ENCODE measurements at regions of chr12 and their contacts with region 1.

Region 1: GRCh38 chr12:114684098-114684869 is at the start of gene TBX3:
- H3K4me3 ChIP-seq: peak within 1 kb of the TSS; percentile 88
- H3K27ac ChIP-seq: peak within 1 kb of the TSS; percentile 91
- H3K4me1 ChIP-seq: peaks cover 4% of the 10 kb centered on the region
- CTCF ChIP-seq: peak; percentile 97

Region 2: GRCh38 chr12:114598111-114598510 is 86.2 kb before region 1 on chr12:
- CTCF ChIA-PET with region 1: no interaction called
- POLR2A ChIA-PET with region 1: no interaction called
- H3K4me3 ChIP-seq: no peak overlapping the region
- H3K27ac ChIP-seq: no peak overlapping the region
- H3K4me1 ChIP-seq: no peaks in the 10 kb centered on the region
- CTCF ChIP-seq: no peak

Region 3: DNA sequence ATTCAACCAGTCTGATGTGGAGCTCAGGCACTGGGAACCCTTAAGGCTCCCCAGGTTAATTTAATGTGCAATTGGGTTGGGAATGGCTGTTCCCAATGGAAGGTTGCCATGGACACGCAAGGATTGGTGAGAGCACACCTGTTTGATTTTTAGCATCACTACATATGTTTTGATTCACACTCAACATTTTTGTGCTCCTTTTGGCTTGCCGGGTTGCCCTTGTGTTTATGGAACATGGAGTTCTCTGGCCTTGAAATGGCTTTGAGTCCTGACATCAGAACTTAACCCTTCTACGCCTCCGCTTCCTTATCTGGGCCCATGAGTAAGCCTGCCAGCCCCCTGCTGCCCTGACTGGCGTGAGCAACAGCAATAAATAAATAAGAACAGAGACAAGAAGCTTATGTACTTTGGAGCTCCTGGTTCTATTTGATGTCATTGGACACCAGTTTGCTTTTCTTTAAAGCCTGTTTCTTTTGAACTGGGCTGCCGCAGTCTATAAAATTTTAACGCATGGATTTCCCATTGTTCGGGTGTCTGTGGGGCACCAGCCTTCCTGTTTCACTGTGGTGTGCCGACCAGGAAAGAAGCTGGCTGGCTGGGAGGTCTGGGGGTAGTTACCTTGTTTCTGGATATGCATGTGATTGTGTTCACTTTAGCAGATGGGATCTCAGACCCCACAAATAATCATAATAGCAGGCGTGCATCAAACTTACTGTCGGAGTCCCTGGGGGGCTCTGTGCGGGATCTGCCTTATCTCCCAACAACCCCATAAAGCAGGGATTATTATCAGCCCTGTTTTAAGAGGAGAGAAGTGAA is 28.1 kb before region 1 on chr12:
- CTCF ChIA-PET with region 1: no interaction called
- POLR2A ChIA-PET with region 1: interaction called, 10 read pairs
- H3K4me3 ChIP-seq: no peak overlapping the region
- H3K27ac ChIP-seq: peak overlapping the region; percentile 75
- H3K4me1 ChIP-seq: peaks cover 23% of the 10 kb centered on the region
- CTCF ChIP-seq: no peak

Region 4: GRCh38 chr12:114673169-114673833 is 11.0 kb before region 1 on chr12:
- CTCF ChIA-PET with region 1: no interaction called
- POLR2A ChIA-PET with region 1: interaction called, 17 read pairs
- H3K4me3 ChIP-seq: no peak overlapping the region
- H3K27ac ChIP-seq: no peak overlapping the region
- H3K4me1 ChIP-seq: no peaks in the 10 kb centered on the region
- CTCF ChIP-seq: no peak

Region 5: DNA sequence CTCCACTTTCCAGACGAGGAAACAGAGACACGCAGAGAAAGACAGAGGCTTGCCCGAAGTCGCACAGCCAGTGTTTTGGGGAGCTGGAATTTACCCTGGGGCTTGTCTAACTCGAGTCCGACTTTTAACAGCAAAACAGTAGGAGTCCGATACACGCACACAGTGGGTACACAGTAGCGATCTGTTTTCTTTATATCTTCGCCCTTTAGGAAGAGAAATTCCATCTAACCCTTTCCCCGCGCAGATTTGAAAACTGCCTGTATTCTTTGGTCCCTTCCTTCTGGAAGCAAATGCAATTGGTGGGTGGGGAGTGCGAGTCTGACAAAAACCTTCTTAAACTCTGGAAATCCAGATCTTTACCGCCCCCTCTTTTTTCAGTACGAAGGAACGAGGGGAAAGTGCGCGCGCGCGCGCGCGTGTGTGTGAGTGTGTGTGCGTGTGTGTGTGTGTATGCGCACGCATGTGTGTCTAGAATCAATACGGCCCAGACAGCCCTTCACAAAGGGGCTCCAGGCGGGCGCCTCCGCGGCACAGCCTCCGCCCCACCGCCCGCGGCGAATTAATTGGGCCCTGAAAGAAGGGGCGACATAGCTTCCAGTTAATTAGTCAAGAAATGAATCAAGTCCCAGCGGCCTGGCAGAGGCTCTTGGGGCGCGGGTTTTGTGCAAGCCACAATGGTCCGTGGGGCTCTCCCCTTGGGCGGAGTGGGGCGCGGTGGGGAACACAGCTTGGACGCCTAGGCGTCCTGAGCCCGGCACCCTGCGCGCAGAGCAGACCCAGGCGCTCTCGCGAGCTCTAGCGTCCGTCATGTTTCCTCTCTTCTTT is 13.7 kb after region 1 on chr12:
- CTCF ChIA-PET with region 1: interaction called, 4 read pairs
- POLR2A ChIA-PET with region 1: interaction called, 15 read pairs
- H3K4me3 ChIP-seq: no peak overlapping the region
- H3K27ac ChIP-seq: no peak overlapping the region
- H3K4me1 ChIP-seq: peaks cover 7% of the 10 kb centered on the region
- CTCF ChIP-seq: no peak

Region 6: DNA sequence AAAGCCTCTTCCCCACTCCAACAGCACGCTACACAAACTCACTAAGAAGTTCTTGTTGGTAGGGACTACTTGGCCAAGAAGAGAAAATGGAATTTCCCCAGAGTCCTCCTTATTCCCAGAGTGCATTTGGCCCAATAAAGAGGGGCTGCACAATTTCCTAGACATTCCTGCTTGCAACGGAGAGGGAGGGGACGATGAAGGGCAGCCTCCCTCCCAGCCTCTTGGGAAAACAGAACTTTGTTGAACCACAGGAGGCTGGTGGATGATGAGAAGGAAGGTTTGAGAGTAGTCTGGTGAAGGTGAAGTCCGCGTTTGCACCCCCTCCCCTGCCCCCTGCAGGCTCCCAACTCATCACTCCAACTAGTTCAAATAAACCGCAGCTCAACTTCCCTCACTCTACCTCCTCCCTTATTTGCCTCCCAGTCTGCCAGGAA is 18.8 kb after region 1 on chr12:
- CTCF ChIA-PET with region 1: interaction called, 4 read pairs
- POLR2A ChIA-PET with region 1: interaction called, 15 read pairs
- H3K4me3 ChIP-seq: no peak overlapping the region
- H3K27ac ChIP-seq: peak overlapping the region; percentile 11; the same call in 1 of the 2 replicates
- H3K4me1 ChIP-seq: peaks cover 11% of the 10 kb centered on the region; the same call in 1 of the 2 replicates
- CTCF ChIP-seq: no peak

Region 7: GRCh38 chr12:114760151-114760877 is 76.0 kb after region 1 on chr12:
- CTCF ChIA-PET with region 1: no interaction called
- POLR2A ChIA-PET with region 1: interaction called, 10 read pairs
- H3K4me3 ChIP-seq: no peak overlapping the region
- H3K27ac ChIP-seq: no peak overlapping the region
- H3K4me1 ChIP-seq: no peaks in the 10 kb centered on the region
- CTCF ChIP-seq: no peak

Region 8: GRCh38 chr12:114809097-114809496 is 124.8 kb after region 1 on chr12:
- CTCF ChIA-PET with region 1: no interaction called
- POLR2A ChIA-PET with region 1: no interaction called
- H3K4me3 ChIP-seq: no peak overlapping the region
- H3K27ac ChIP-seq: no peak overlapping the region
- H3K4me1 ChIP-seq: peaks cover 4% of the 10 kb centered on the region
- CTCF ChIP-seq: no peak

Region 9: GRCh38 chr12:114848666-114849065 is 164.4 kb after region 1 on chr12:
- CTCF ChIA-PET with region 1: no interaction called
- POLR2A ChIA-PET with region 1: interaction called, 12 read pairs
- H3K4me3 ChIP-seq: no peak overlapping the region
- H3K27ac ChIP-seq: no peak overlapping the region
- H3K4me1 ChIP-seq: no peaks in the 10 kb centered on the region
- CTCF ChIP-seq: no peak